Head of caudate nucleus (tissue), 42 donors: ENCODE measurements at regions of chr3 and their contacts with region 1.

Region 1: DNA sequence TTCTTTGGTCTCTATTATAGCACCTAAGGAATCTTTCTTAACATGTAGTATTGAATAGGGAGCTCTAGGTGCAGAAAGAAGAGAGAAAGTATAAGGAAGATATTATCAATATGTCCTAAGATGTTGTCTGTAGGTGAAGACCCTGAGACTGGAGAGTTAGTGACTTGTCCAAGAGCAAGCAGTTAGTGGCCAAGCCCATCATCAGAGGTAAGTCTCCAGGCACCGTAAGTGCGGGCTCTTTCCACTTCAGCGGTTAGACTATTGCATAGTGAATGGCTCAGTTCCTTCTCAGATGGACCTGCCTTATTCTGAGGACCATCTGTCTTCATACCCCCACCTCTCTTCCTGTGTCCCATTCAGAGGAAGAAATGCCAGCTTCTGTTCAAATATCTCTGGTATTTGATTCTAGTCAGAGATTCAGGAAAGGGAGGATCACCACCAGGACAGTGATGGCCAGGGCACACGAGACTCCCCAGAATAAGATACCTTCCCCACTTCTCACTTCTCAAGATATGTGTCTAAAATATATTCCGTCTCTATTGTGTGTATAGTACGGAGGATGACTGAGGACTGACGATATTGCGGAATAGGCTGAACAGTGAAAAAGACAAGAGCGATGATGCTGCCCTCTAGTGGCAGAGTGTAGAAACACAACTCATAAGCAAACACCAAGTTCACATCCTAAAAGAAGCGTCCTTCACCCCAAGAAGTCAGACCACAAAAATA is 19.1 kb upstream of the ADGRG7 start:
- DNase-seq: peak in 39 of 42 donors; percentile 12 to 89 (median 68)

Region 2: GRCh38 chr3:100316641-100317069 is 273.6 kb before region 1 on chr3:
- intact Hi-C with region 1: loop called (anchors 10 kb)
- DNase-seq: peak in 24 of 42 donors; percentile 10 to 73 (median 41)

Region 3: GRCh38 chr3:100463002-100463401 is 127.3 kb before region 1 on chr3:
- intact Hi-C with region 1: loop called (anchors 5 kb)
- DNase-seq: peak in 15 of 42 donors; percentile 6 to 62 (median 30)